Common myeloid progenitor, CD34-positive (primary cell): ENCODE measurements at regions of chr17 and their contacts with region 1.

Region 1: GRCh38 chr17:59311130-59311920 is 20.1 kb upstream of the YPEL2 start:
- DNase-seq: peak; percentile 70 to 82 (median 71)
- H3K4me3 ChIP-seq: no peak overlapping the region
- H3K27ac ChIP-seq: no peak overlapping the region
- H3K4me1 ChIP-seq: no peaks in the 10 kb centered on the region
- H3K27me3 ChIP-seq: no peaks in the 10 kb centered on the region

Region 2: GRCh38 chr17:59300682-59301321 is 10.5 kb before region 1 on chr17:
- CTCF ChIA-PET with region 1: interaction called, 10 read pairs
- POLR2A ChIA-PET with region 1: no interaction called
- DNase-seq: no peak
- H3K4me3 ChIP-seq: no peak overlapping the region
- H3K27ac ChIP-seq: no peak overlapping the region
- H3K4me1 ChIP-seq: peaks cover 0 to 2% (median 0%) of the 10 kb centered on the region in 4 experiments
- H3K27me3 ChIP-seq: no peaks in the 10 kb centered on the region

Region 3: GRCh38 chr17:59331129-59331928 is 20.0 kb after region 1 on chr17 and contains the start of gene YPEL2:
- CTCF ChIA-PET with region 1: interaction called, 17 read pairs
- POLR2A ChIA-PET with region 1: no interaction called
- DNase-seq: peak; percentile 92 to 96 (median 96)
- H3K4me3 ChIP-seq: peak within 1 kb of the TSS; percentile 76 to 92 (median 84)
- H3K27ac ChIP-seq: peak within 1 kb of the TSS in 1 of 2 experiments; percentile 77
- H3K4me1 ChIP-seq: peaks cover 12 to 37% (median 31%) of the 10 kb centered on the region in 4 experiments
- H3K27me3 ChIP-seq: no peaks in the 10 kb centered on the region

Region 4: GRCh38 chr17:59391006-59391405 is 79.7 kb after region 1 on chr17:
- CTCF ChIA-PET with region 1: no interaction called
- POLR2A ChIA-PET with region 1: no interaction called
- DNase-seq: no peak
- H3K4me3 ChIP-seq: no peak overlapping the region
- H3K27ac ChIP-seq: no peak overlapping the region
- H3K4me1 ChIP-seq: no peaks in the 10 kb centered on the region
- H3K27me3 ChIP-seq: no peaks in the 10 kb centered on the region

Region 5: DNA sequence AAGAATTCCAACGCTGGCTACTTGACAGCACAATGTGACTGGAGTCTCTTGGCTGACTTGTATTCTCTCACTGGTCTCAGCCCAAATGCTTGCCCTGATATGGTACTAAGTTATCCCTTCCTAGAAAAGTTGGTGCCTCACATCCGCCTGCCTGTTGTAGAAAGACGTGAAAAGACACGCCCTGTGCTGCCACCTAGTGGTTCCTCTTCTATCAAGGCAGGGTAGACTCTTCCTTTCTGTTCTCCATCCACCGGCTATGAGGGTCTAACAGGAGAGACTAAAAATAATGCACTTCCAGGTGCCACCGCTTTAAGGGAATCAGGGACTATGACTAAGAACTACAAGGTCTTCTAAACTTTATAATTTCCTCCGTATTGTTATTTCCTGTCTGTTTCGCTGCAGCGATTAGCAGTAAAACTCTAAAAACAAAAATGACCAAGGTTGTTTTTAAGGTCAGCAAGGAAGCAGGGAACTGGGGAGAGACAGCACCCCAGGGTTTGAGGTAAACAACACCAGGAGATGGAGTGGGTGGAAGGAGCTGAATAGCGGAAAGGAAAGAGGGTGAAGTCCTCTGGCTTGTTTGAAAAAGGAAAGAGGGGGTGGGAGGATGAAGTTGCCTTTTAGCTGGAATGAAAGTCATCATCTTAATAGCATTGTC is 129.6 kb after region 1 on chr17:
- CTCF ChIA-PET with region 1: interaction called, 128 read pairs
- POLR2A ChIA-PET with region 1: no interaction called
- DNase-seq: peak; percentile 90 to 95 (median 91)
- H3K4me3 ChIP-seq: no peak overlapping the region
- H3K27ac ChIP-seq: no peak overlapping the region
- H3K4me1 ChIP-seq: peaks cover 7 to 36% (median 27%) of the 10 kb centered on the region in 4 experiments
- H3K27me3 ChIP-seq: no peaks in the 10 kb centered on the region